Endothelial cell of umbilical vein (primary cell): ENCODE measurements at regions of chr1 and their contacts with region 1.

Region 1: DNA sequence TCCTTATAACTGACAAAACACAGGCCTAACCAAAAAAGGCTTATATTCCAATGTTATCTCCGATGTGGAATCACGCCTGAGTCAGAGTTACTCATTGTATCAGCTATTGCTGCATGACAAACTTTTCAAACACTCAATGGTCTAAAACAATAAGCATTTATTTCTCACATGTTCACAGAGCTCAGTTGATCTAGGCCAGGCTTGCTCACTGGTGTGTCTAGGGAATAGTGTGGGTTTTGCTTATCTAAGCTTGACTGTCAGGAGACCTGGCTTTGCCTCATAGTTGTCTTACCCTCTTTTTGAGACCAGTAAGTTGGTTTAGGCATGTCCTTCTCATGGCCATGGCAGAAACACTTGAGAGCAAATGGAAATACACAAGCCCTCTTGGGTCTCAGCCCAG is 130.7 kb downstream of the HMCN1 start:
- DNase-seq: peak; percentile 74
- H3K4me3 ChIP-seq: no peak overlapping the region
- H3K27ac ChIP-seq: peak overlapping the region; percentile 63
- H3K4me1 ChIP-seq: peaks cover 36% of the 10 kb centered on the region
- H3K27me3 ChIP-seq: no peaks in the 10 kb centered on the region
- CTCF ChIP-seq: no peak
- POLR2A ChIP-seq: no peak

Region 2: DNA sequence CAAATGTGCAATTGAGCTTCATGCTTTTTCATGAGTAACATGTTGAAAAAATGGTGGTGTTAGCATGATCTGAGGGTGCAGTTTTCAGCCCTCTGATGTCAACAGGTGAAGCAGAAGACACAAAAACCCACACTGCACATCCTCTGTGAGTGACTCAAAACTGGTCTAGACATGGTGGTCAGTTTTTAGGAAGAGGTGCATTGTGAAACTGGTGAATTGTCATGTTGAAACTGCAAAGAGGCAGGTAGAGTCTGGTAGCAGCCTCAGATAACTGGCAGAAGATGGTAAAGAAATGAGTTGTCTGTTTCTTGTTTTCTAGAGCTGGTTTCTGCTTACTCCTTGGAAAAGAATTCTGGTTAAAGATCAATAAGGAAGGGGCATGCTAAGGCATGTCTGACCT is 228.0 kb before region 1 on chr1:
- CTCF ChIA-PET with region 1: no interaction called
- POLR2A ChIA-PET with region 1: no interaction called
- dilution Hi-C with region 1: no loop called
- intact Hi-C with region 1: no loop called
- DNase-seq: no peak
- H3K4me3 ChIP-seq: no peak overlapping the region
- H3K27ac ChIP-seq: no peak overlapping the region
- H3K4me1 ChIP-seq: no peaks in the 10 kb centered on the region
- H3K27me3 ChIP-seq: no peaks in the 10 kb centered on the region
- CTCF ChIP-seq: no peak
- POLR2A ChIP-seq: no peak

Region 3: DNA sequence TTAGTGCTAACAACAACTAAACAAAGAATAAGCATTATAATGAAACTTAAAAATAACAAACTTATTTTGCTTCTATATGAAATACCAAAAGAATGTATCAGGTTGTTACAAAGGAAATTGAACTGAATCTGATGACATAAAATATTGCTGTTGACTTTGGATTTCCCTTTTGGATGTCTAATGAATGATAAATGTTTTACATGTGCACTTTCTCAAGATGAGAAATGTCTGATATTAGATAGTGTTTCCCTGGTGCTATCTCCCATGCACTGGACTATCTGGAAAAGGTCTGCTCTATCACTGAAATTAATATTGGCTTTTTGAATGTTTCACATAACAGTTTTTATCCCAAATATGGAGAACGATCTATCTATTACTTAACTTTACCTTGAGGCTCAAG is 49.2 kb after region 1 on chr1:
- CTCF ChIA-PET with region 1: no interaction called
- POLR2A ChIA-PET with region 1: no interaction called
- dilution Hi-C with region 1: no loop called
- intact Hi-C with region 1: loop called (anchors 1 kb)
- DNase-seq: peak; percentile 28
- H3K4me3 ChIP-seq: no peak overlapping the region
- H3K27ac ChIP-seq: no peak overlapping the region
- H3K4me1 ChIP-seq: no peaks in the 10 kb centered on the region
- H3K27me3 ChIP-seq: no peaks in the 10 kb centered on the region
- CTCF ChIP-seq: no peak
- POLR2A ChIP-seq: no peak

Region 4: DNA sequence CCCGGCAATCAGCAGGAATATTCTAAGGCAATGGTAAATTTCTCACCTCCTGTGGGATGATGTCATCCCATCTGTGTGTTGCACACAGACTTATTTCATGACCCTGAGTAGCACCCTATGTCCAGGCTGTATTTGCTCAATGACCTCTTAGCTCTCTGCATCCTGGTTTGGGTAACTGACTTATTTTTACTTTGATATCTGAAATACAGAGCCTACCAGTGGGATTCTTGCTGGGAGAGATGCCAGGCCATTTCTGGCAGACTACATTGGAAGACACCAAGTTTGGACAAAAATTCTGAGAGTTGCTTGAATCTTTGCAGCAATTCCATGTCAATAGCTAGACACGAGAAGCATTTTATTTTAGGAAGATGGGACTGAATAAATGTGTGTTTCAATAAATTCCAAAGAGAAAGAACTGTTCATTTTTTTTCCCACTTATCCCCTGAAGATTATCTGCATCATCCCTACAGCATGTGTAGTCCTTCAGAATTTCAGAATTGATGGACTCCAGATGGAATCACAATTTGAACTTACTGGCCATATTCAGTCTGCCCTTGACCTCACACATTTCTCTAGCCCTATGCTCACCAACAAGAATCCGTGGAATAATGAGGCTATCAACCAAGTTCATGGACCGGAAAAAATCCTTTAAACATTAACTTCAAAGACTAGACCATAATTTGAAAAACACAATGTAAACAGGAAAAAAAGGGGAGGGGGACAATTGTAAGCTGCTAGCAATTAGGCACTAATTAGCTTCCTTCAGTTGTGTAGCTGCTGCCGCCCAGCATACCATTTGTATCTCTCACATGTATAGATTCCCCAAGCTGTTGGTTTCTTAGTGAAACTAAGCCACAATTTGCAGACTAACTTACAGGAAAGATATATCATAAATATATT is 95.8 kb after region 1 on chr1:
- CTCF ChIA-PET with region 1: no interaction called
- POLR2A ChIA-PET with region 1: no interaction called
- dilution Hi-C with region 1: no loop called
- intact Hi-C with region 1: no loop called
- DNase-seq: peak; percentile 18
- H3K4me3 ChIP-seq: no peak overlapping the region
- H3K27ac ChIP-seq: no peak overlapping the region
- H3K4me1 ChIP-seq: no peaks in the 10 kb centered on the region
- H3K27me3 ChIP-seq: no peaks in the 10 kb centered on the region
- CTCF ChIP-seq: no peak
- POLR2A ChIP-seq: no peak

Region 5: GRCh38 chr1:186188004-186188539 is 323.2 kb after region 1 on chr1:
- CTCF ChIA-PET with region 1: no interaction called
- POLR2A ChIA-PET with region 1: no interaction called
- dilution Hi-C with region 1: no loop called
- intact Hi-C with region 1: loop called (anchors 5 kb)
- DNase-seq: peak; percentile 78
- H3K4me3 ChIP-seq: no peak overlapping the region
- H3K27ac ChIP-seq: peak overlapping the region; percentile 83
- H3K4me1 ChIP-seq: peaks cover 25% of the 10 kb centered on the region
- H3K27me3 ChIP-seq: no peaks in the 10 kb centered on the region
- CTCF ChIP-seq: no peak
- POLR2A ChIP-seq: no peak